ENCODE measurements at regions of chr5 and their contacts with region 1.

Region 1: GRCh38 chr5:62783374-62784057 is 204.9 kb downstream of the LRRC70 start:
- DNase-seq: no peak
- ATAC-seq: no peak

Region 2: DNA sequence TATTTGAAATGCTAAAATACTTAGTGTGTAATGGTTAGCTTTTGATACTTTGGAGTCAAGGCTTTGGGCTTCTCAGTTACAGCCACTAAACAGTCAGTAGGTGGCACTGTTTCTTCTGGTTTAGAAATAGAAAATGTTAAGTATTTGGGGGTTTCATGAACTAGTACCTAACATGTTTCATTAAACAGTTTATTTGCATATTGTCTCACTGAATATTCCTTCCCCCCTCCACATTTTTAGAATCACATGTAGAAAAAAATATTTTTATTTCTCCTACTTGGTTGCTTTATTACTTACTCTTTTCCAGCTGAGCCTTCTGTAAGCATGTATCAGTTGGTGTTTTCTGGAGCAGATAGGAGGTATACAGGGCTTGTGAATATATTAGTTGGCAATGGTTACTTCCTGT is 322.9 kb before region 1 on chr5:
- intact Hi-C with region 1: loop called in 1 of 2 experiments (anchors 5 kb)
- DNase-seq: no peak
- ATAC-seq: no peak